MCF 10A (cell line): ENCODE measurements at regions of chr9 and their contacts with region 1.

Region 1: DNA sequence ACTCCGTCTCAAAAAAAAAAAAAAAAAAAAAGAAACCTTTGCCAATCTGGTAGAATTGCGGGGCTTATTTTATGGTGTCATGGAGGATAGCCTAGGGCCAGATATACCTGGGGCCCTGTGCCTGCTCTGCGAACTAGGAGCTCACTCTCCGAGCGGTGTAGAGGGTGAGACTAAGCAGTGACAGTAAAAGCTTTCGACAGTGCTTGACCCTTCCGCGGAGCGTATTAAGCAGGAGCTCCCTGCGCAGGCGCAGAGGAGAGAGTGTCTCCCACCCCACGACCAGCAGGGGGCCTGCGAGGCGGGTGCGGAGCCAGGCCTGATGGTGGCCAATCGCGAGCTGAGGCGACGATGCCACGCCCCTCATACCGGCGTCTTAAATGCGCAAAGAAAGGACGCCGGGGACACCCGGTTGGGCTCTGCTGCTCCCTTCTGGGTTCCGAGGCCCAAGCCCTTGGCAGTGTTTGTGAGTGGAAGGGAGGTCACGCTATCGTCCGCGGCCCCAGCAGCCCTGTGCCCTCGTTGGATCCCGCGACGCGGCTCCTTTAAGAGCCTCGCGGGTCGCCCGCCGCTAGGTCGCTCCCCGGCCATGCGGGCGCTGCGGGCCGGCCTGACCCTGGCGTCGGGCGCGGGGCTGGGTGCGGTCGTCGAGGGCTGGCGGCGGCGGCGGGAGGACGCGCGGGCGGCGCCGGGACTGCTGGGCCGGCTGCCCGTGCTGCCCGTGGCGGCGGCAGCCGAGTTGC is at the start of gene ENDOG:
- DNase-seq: peak; percentile 97
- H3K4me3 Mint-ChIP-seq: peak within 1 kb of the TSS; percentile 72
- H3K27ac Mint-ChIP-seq: no peak within 1 kb of the TSS
- H3K4me1 Mint-ChIP-seq: no peaks in the 10 kb centered on the region
- H3K27me3 Mint-ChIP-seq: no peaks in the 10 kb centered on the region
- CTCF ChIP-seq: peak; percentile 94
- total RNA-seq, gene ENDOG: 18.2 and 22.0 TPM in 2 replicates

Region 2: GRCh38 chr9:127884427-127884911 is 933.8 kb before region 1 on chr9:
- CTCF ChIA-PET with region 1: no interaction called
- POLR2A ChIA-PET with region 1: no interaction called
- intact Hi-C with region 1: no loop called
- DNase-seq: no peak
- H3K4me3 Mint-ChIP-seq: no peak overlapping the region
- H3K27ac Mint-ChIP-seq: no peak overlapping the region
- H3K4me1 Mint-ChIP-seq: no peaks in the 10 kb centered on the region
- H3K27me3 Mint-ChIP-seq: no peaks in the 10 kb centered on the region
- CTCF ChIP-seq: no peak

Region 3: DNA sequence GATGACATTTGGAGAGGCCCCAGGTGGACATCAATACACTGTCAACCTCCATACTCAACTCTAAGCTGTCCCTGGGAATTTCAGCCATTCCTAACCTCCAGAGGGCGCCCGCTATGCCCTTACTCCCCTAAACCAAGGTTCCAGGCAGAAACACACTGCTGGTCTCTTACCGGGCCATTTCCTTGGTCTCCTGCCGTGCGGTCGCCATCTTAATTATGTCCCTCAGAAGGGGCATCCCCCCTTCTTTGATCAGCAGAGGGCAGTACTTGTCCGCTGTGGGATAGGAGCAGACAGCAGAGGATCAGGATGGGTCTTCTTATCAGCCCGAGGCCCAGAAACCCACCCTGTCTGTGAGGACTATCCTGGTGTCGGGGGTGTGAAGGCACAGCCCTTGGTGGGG is 85.0 kb before region 1 on chr9:
- CTCF ChIA-PET with region 1: no interaction called
- POLR2A ChIA-PET with region 1: interaction called, 4 read pairs
- intact Hi-C with region 1: loop called (anchors 1 kb)
- DNase-seq: peak; percentile 93
- H3K4me3 Mint-ChIP-seq: no peak overlapping the region
- H3K27ac Mint-ChIP-seq: no peak overlapping the region
- H3K4me1 Mint-ChIP-seq: no peaks in the 10 kb centered on the region
- H3K27me3 Mint-ChIP-seq: no peaks in the 10 kb centered on the region
- CTCF ChIP-seq: peak; percentile 59

Region 4: DNA sequence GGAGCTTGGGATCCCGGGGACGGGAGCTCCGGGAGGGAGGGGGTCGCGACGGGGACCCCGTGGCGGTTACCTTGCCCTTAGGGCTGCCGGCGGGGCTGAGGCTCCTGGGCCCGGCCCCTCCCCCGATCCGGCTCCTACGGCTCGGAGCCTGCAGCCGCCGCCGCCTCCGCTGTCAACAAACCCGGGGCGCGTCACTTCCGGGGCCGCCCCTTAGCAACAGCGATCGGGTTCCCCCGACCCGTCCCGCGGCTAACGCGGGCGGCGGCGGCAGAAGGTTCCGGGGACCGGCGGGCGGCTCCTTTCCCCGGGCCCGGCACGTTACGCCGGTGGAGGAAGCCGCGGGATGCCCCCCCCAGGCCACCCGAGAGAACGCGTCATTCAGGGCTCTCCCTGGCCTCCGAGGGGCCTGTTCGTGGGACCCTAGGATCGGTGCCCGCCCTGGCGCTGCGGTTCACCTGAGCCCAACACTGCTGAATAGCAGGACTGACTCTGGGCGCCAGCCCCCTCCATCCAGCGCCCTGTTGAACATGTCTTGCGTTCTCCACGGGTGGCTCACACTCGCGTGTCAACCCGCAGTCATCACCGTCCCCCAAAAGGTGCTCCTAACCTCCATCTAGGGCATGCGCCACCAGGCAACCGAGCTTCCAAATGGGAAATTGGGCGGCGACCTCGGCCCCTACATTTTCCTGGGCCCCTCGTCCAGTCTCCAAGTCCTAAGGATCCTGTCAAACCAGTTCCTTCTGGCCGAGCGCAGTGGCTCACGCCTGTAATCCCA is 46.3 kb before region 1 on chr9 and contains the start of gene ZER1:
- CTCF ChIA-PET with region 1: interaction called, 3 read pairs
- POLR2A ChIA-PET with region 1: interaction called, 29 read pairs
- intact Hi-C with region 1: no loop called
- DNase-seq: peak; percentile 85
- H3K4me3 Mint-ChIP-seq: peak within 1 kb of the TSS; percentile 96
- H3K27ac Mint-ChIP-seq: peak within 1 kb of the TSS; percentile 92
- H3K4me1 Mint-ChIP-seq: peaks cover 11% of the 10 kb centered on the region
- H3K27me3 Mint-ChIP-seq: no peaks in the 10 kb centered on the region
- CTCF ChIP-seq: no peak
- total RNA-seq, gene ZER1: 19.5 and 26.6 TPM in 2 replicates

Region 5: GRCh38 chr9:128786681-128787601 is 31.3 kb before region 1 on chr9 and contains the start of gene TBC1D13:
- CTCF ChIA-PET with region 1: interaction called, 18 read pairs
- POLR2A ChIA-PET with region 1: interaction called, 5 read pairs
- intact Hi-C with region 1: no loop called
- DNase-seq: peak; percentile 80
- H3K4me3 Mint-ChIP-seq: peak within 1 kb of the TSS; percentile 90
- H3K27ac Mint-ChIP-seq: peak within 1 kb of the TSS; percentile 85
- H3K4me1 Mint-ChIP-seq: no peaks in the 10 kb centered on the region
- H3K27me3 Mint-ChIP-seq: no peaks in the 10 kb centered on the region
- CTCF ChIP-seq: no peak
- total RNA-seq, gene TBC1D13: 10.9 and 13.8 TPM in 2 replicates

Region 6: DNA sequence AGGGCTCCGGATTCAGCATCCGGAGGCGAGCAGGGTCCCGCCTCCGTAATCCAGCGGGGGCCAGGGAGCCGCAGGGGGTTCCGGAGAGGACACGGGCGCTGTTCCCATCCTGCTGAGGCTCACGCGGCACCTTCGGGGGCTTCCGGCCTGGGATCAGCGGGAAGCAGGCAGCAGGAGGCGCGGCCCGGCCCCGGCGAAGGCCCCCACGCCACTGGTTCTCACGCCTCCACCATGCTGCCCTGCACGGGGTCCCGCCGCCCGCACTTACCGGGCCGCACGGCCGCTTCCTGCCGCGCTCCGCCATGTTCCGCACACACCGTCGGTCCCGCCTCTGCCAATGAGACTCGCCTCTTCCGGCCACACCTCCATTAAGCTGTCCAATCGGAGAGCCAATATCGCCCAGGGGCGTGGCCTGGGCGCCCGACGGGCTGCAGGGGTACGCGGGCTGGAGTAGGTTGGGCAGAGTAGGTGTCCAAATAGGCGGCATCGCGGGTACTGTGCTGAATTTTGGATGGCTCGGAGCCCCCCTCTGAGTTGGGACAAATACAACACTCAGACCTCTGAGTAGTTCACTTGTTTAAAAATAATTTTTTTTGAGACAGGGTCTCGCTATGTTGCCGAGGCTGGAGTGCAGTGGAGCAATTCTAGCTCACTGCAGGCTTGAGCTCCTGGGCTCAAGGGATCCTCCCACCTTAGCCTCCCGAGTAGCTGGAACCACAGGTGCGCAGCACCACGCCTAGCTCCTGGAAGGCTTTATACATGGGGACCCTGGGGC is 11.4 kb after region 1 on chr9 and contains the start of gene SPOUT1:
- CTCF ChIA-PET with region 1: interaction called, 13 read pairs
- POLR2A ChIA-PET with region 1: interaction called, 39 read pairs
- intact Hi-C with region 1: no loop called
- DNase-seq: peak; percentile 95
- H3K4me3 Mint-ChIP-seq: peak within 1 kb of the TSS; percentile 97
- H3K27ac Mint-ChIP-seq: peak within 1 kb of the TSS; percentile 94
- H3K4me1 Mint-ChIP-seq: peaks cover 15% of the 10 kb centered on the region
- H3K27me3 Mint-ChIP-seq: no peaks in the 10 kb centered on the region
- CTCF ChIP-seq: no peak
- total RNA-seq, gene SPOUT1: 30.1 and 32.4 TPM in 2 replicates